AG04450 (cell line): ENCODE measurements at regions of chr1 and their contacts with region 1.

Region 1: GRCh38 chr1:153532769-153533599 is 2.8 kb downstream of the S100A6 start:
- DNase-seq: peak; percentile 52
- H3K4me3 ChIP-seq: peak overlapping the region; percentile 98
- H3K27ac ChIP-seq: peak overlapping the region; percentile 96
- H3K27me3 ChIP-seq: no peaks in the 10 kb centered on the region
- CTCF ChIP-seq: peak; percentile 88

Region 2: DNA sequence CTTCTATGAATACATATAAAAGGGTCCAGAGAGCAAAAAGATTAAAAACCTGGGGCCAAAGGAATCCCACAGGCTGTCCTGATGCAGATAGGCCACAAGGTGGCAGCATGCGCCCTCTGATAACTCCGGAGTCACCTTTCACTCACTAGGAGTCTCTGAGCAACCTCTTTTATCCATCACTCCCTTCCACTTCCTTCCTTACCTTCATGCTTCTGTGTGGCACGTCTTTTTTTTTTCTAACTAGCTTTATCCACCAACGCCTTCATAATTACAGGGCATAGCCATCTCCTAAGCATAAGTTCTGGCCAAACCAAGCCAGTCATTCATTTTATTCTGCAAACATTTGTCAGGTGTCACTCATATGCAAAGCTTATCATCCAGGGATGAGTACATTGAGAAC is 180.5 kb before region 1 on chr1:
- CTCF ChIA-PET with region 1: interaction called, 26 read pairs
- POLR2A ChIA-PET with region 1: no interaction called
- DNase-seq: peak; percentile 30
- H3K4me3 ChIP-seq: no peak overlapping the region
- H3K27ac ChIP-seq: no peak overlapping the region
- H3K27me3 ChIP-seq: peaks cover 6% of the 10 kb centered on the region
- CTCF ChIP-seq: peak; percentile 93

Region 3: DNA sequence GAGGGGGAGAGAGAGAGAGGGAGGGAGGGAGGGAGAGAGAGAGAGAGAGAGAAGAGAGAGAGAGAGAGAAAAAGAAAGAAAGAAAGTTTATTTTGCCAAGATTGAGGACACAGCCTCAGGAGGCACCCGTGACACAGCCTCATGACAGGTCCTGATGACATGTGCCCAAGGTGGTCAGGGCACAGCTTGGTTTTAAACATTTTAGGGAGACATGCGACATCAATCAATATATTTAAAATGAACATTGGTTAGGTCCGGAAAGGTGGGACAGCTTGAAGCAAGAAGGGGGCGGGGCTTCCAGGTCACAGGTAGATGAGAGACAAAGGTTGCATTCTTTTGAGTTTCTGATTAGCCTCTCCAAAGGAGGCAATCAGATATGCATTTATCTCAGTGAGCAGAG is 12.8 kb before region 1 on chr1:
- CTCF ChIA-PET with region 1: interaction called, 31 read pairs
- POLR2A ChIA-PET with region 1: no interaction called
- DNase-seq: no peak
- H3K4me3 ChIP-seq: no peak overlapping the region
- H3K27ac ChIP-seq: no peak overlapping the region
- H3K27me3 ChIP-seq: no peaks in the 10 kb centered on the region
- CTCF ChIP-seq: no peak

Region 4: GRCh38 chr1:153553830-153554541 is 21.0 kb after region 1 on chr1:
- CTCF ChIA-PET with region 1: interaction called, 22 read pairs
- POLR2A ChIA-PET with region 1: interaction called, 7 read pairs
- DNase-seq: no peak
- H3K4me3 ChIP-seq: no peak overlapping the region
- H3K27ac ChIP-seq: peak overlapping the region; percentile 47
- H3K27me3 ChIP-seq: no peaks in the 10 kb centered on the region
- CTCF ChIP-seq: no peak

Region 5: GRCh38 chr1:153577624-153578051 is 44.7 kb after region 1 on chr1:
- CTCF ChIA-PET with region 1: interaction called, 165 read pairs
- POLR2A ChIA-PET with region 1: no interaction called
- DNase-seq: no peak
- H3K4me3 ChIP-seq: no peak overlapping the region
- H3K27ac ChIP-seq: no peak overlapping the region
- H3K27me3 ChIP-seq: no peaks in the 10 kb centered on the region
- CTCF ChIP-seq: no peak

Region 6: DNA sequence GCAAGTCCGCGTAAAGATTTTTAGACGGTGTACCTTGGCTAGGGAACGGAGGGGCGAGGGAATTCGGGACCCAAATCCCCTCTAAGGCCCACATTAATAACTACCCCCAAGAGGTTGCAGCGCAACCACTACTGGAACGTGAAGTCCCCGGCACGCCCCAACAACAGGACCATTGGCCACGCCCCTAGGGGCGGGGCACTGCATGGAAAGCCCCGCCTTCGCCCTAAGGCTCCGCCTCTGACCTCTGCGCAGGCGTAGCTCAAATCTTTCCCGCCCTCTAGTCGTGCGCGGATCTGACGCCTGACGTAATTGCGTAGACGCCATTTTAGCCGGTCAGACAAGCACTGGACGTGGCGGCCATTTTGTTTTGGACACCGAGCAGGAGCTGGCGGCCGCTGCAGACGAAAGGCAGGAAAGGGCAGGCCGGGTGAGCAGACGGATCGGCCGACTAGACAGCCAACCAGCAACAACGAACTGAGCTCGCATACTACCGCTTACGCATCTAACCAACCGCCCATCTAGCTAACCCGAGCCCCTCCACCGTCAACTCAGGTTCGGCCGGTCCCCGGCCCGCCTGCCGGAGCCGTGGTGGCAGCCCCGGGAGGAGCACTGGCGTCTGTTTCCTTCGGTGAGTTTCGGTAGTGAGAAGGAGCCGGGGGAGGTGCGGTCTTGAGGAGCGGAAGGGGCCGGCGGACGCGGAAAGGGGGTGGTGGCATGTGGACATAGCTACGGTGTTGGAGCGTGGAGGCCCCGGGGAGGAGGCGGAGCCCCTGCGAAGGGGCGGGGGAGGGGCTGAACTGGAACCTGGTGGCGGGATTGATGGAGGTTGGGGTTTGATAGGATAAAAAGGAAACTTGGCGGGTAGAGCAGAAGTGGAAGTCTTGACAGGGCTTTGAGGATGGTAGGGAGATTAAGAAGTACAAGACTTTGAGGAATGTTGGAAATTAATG is 101.0 kb after region 1 on chr1 and contains the start of gene CHTOP:
- CTCF ChIA-PET with region 1: interaction called, 13 read pairs
- POLR2A ChIA-PET with region 1: interaction called, 7 read pairs
- DNase-seq: peak; percentile 97
- H3K4me3 ChIP-seq: peak within 1 kb of the TSS; percentile 95
- H3K27ac ChIP-seq: peak within 1 kb of the TSS; percentile 100
- H3K27me3 ChIP-seq: no peaks in the 10 kb centered on the region
- CTCF ChIP-seq: no peak
- polyA plus RNA-seq, gene CHTOP: 49.2 and 59.5 TPM in 2 replicates

Region 7: GRCh38 chr1:154062309-154062708 is 529.3 kb after region 1 on chr1:
- CTCF ChIA-PET with region 1: no interaction called
- POLR2A ChIA-PET with region 1: no interaction called
- DNase-seq: no peak
- H3K4me3 ChIP-seq: no peak overlapping the region
- H3K27ac ChIP-seq: no peak overlapping the region
- H3K27me3 ChIP-seq: peaks cover 13% of the 10 kb centered on the region
- CTCF ChIP-seq: no peak